GM23248 (cell line): ENCODE measurements at regions of chr7 and their contacts with region 1.

Region 1: DNA sequence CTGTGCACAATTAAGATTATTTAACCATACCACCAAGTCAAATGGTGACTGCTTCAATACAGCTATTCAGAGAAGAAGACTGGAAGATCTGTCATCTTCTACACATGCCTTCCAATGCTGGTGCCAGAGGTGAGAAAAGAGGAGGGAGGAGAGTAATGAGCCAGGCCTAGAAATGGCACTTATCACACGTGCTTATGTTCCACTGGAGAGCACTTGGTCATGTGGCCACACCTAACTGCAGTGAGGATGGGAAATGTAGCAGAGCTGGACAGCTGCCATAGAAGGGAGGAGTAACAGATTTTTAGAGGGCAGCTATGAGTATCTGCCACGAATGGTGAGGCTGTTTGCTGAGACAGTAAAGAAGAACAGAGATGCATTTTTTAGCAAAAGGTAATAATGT is 77.1 kb downstream of the MPLKIP start:
- DNase-seq: peak; percentile 61
- H3K4me3 ChIP-seq: no peak overlapping the region
- H3K27ac ChIP-seq: no peak overlapping the region
- H3K4me1 ChIP-seq: no peaks in the 10 kb centered on the region
- H3K27me3 ChIP-seq: no peaks in the 10 kb centered on the region

Region 2: DNA sequence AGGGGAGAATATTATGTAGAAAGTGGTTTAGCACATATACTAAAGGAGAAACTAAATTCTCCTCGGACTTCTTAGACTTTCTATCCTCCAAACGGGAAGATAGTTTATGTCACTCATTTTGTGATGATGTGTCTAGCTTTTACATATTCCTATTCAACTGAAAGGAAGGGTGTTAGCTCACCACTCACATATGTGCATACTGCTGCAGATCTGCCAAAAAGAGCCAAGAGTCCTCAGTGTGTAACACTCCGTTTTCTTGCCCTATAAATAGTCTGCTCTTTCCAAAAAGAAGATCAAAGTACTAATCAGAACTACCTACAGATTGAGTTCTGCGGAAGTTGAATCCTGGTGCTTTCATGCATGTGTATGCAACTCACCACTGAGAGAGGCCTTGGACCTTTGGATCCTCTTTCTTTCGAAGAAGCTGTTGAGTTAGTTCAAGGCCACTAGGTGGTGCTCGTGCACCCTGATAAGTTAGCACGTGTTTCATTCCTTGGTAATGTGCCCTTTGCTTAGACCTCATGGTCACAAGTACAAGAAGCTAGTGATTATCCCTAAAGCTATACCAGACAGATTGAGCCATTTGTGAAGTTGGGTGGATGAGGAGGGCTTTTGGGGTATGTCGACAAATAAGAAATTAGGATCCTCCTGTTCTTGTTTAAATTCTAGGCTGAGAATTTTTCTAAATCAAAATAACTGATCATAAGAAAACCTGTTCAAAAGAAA is 477.0 kb before region 1 on chr7:
- in situ Hi-C with region 1: loop called (anchors 25 kb)
- DNase-seq: peak; percentile 95
- H3K4me3 ChIP-seq: no peak overlapping the region
- H3K27ac ChIP-seq: no peak overlapping the region
- H3K4me1 ChIP-seq: no peaks in the 10 kb centered on the region
- H3K27me3 ChIP-seq: no peaks in the 10 kb centered on the region

Region 3: DNA sequence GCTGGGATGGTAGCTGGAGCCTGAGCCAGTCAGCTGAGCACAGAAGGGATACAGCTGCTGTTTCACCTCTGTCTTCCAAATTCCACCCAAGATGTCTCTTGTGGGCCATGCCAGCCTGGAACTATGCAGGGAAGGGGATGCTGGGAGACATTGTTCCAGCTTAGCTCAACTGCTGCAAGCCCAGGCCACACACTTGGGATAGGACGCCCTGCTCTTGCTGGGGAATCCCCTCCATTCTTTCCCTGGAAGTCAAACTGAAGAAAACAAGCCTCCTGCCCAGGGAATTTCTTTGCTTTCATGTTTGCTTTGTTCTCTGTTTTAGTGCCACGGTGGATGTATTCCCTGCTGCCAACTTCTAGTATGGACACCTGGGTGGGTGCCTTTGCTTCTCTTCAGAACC is 162.4 kb before region 1 on chr7:
- in situ Hi-C with region 1: loop called (anchors 10 kb)
- DNase-seq: no peak
- H3K4me3 ChIP-seq: no peak overlapping the region
- H3K27ac ChIP-seq: no peak overlapping the region
- H3K4me1 ChIP-seq: no peaks in the 10 kb centered on the region
- H3K27me3 ChIP-seq: peaks cover 20% of the 10 kb centered on the region